ENCODE measurements at regions of chr12 and their contacts with region 1.

Region 1: GRCh38 chr12:42332301-42333285 is 6.6 kb downstream of the PPHLN1 start:
- DNase-seq: peak; percentile 64
- H3K4me3 ChIP-seq: no peak overlapping the region
- H3K27ac ChIP-seq: no peak overlapping the region
- H3K4me1 ChIP-seq: peaks cover 5% of the 10 kb centered on the region
- H3K27me3 ChIP-seq: no peaks in the 10 kb centered on the region
- CTCF ChIP-seq: peak; percentile 52 to 71 (median 57)
- POLR2A ChIP-seq: no peak

Region 2: GRCh38 chr12:42129595-42130204 is 202.9 kb before region 1 on chr12:
- intact Hi-C with region 1: loop called (anchors 5 kb)
- DNase-seq: peak; percentile 54
- H3K4me3 ChIP-seq: no peak overlapping the region
- H3K27ac ChIP-seq: peak overlapping the region in 1 of 2 donors; percentile 36
- H3K4me1 ChIP-seq: peaks cover 6% of the 10 kb centered on the region
- H3K27me3 ChIP-seq: no peaks in the 10 kb centered on the region
- CTCF ChIP-seq: peak; percentile 71 to 80 (median 77)
- POLR2A ChIP-seq: no peak

Region 3: DNA sequence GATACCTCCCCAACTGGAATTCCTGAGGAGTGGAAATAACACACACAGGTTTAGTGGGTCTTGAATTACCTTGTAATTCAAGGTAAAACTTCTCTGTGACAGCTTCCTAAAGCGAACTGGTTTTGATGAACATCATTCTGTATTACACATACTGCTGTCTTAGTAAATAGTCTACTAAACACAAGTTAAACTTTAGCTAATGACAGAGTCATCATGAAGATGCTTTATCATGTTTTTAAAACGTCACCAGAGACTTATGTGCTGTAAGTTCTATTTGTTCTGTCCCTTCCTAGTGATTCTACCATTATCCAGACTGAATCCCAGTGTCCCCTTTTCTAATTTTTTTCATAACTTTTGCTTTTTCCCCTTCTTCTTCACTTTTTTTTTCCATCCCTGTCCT is 176.4 kb before region 1 on chr12:
- intact Hi-C with region 1: no loop called
- DNase-seq: no peak
- H3K4me3 ChIP-seq: no peak overlapping the region
- H3K27ac ChIP-seq: no peak overlapping the region
- H3K4me1 ChIP-seq: no peaks in the 10 kb centered on the region
- H3K27me3 ChIP-seq: no peaks in the 10 kb centered on the region
- CTCF ChIP-seq: no peak
- POLR2A ChIP-seq: no peak